ENCODE measurements at regions of chr16 and their contacts with region 1.

Region 1: DNA sequence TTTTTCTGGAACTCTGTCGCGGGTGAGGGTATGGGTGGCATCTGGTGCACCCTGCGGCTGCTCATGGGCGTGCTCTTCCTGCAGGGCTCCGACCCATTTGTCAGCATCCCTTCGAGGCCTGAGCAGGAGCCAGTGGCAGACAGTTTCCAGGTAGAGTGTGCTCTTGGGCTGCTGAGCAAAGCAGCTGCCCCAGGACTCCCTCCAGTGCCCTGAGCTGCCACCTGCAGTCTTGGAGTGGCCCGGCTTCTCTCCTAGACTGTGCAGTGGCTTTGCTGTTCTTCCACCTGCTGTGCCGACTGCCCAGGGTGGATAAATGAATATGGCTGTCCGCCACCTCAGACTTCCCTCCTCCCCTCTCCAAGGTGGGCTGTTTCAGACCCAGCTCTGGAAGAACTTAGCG is 10.8 kb upstream of the JPT2 start:
- DNase-seq: no peak
- H3K4me3 ChIP-seq: no peak overlapping the region
- H3K27ac ChIP-seq: no peak overlapping the region
- H3K4me1 ChIP-seq: no peaks in the 10 kb centered on the region
- H3K27me3 ChIP-seq: no peaks in the 10 kb centered on the region
- CTCF ChIP-seq: no peak
- POLR2A ChIP-seq: no peak

Region 2: DNA sequence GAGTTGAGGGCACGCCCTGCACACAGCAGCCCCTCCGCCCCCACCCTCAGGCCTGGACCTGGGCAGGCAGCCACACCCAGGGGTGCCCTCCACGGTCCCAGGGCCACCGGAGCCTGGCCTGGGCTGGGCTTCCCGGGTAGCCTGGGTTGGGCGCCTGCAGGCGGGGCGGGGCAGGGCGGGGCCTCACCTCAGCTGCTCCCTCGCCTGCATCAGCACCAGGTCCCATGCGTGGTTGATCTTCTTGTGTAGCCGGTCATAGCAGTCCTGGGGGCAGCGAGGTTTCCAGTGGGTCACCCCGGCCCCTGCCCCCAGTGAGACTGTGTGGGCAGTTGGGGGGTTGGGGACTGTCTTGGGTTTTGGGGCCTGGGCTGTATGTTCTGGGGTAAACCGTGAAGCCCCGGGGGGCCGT is 1393.7 kb before region 1 on chr16:
- intact Hi-C with region 1: loop called (anchors 5 kb)
- DNase-seq: no peak
- H3K4me3 ChIP-seq: no peak overlapping the region
- H3K27ac ChIP-seq: no peak overlapping the region
- H3K4me1 ChIP-seq: peaks cover 0 to 6% of the 10 kb centered on the region in 2 donors
- H3K27me3 ChIP-seq: peaks cover 0 to 7% of the 10 kb centered on the region in 2 donors
- CTCF ChIP-seq: no peak
- POLR2A ChIP-seq: no peak

Measured in breast epithelium (tissue), 4 donors.